Posterior vena cava (tissue), 2 donors: ENCODE measurements at regions of chr10 and their contacts with region 1.

Region 1: DNA sequence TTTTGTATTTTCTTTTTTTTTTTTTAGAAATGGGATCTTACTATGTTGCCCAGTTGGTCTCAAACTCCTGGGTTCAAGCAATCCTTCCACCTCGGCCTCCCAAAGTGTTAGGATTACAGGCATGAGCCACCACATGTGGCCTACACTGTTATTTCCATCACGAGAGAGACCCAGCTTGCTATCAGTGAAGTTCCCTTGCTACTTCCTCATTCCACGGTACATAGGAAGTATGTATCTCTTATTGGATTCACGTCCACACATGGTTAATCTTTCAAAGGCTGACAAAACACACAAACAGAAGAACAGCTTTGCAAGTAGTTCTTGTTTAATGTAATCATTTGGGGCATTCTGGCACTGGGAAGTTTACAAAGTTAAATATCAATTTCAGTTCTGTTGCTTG is 50.9 kb downstream of the DCLRE1A start:
- DNase-seq: no peak

Region 2: GRCh38 chr10:112938808-112939482 is 864.1 kb before region 1 on chr10:
- intact Hi-C with region 1: no loop called
- DNase-seq: no peak

Region 3: DNA sequence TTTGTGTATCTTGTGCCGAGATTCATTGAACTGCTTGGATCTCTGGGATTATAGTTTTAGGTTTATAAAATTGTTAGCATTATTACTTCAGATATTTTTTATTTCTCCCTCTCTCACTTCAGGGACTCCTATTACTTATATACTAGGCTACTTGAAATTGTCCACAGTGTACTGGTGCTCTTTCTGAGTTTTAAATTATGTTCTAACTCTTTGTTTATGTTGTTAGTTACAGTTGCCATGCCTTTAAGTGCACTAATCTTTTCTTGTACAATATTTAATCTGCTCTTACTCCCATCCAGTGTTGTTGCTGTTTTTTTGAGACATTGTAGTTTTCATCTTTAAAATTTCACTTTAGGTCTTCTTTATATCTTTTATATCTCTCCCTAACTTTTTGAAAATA is 38.4 kb before region 1 on chr10:
- intact Hi-C with region 1: no loop called
- DNase-seq: no peak

Region 4: GRCh38 chr10:114103284-114103683 is 300.3 kb after region 1 on chr10:
- intact Hi-C with region 1: loop called (anchors 5 kb)
- DNase-seq: no peak